ENCODE measurements at regions of chr10 and their contacts with region 1.

Region 1: DNA sequence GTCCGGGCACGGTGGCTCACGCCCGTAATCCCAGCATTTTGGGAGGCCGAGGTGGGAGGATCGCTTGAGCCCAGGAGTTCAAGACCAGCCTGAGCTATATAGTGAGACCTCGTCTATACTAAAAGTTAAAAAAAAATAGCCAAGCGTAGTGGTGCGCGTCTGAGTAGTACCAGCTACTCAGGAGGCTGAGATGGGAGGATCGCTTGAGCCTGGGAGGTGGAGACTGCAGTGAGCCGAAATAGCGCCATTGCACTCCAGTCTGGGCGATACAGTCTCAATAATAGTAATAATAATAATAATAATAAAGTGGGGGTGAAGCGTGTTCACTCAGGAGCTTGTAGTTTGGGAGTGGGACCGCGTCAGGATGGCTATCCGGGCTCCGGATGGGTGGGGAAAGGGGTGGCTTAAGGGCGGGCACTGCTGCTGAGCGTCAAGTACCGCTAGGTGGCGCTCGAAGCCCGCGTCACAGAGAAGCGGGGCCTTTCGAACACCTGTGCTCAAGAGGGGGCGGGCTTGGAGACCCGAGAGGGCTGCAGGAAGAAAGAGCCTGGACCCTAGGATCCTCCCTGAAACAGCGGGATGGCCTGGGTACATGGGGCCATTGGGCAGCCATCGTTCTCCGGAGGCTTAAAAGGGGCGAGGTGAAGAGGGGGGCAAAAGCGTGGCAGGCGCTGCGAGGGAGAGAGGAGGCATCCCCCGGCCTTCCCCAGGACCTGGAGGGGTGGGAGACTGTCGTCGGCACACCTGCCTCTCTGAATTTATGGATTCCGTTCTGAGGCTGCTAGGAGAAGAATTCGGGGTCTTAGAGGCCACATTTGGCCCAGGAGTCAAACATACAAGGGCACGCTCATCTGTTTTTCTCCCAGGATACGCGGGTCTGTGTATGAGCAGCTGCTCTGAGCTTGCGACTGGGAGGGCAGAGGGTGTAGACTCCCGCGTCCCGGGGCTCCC is 14.5 kb downstream of the LBX1 start:
- DNase-seq: peak; percentile 66
- ATAC-seq: peak; percentile 82
- H3K4me3 ChIP-seq: peak overlapping the region; percentile 55 to 63
- H3K27ac ChIP-seq: no peak overlapping the region
- H3K4me1 ChIP-seq: peaks cover 7 to 17% of the 10 kb centered on the region in 2 experiments; a peak in 2 of 4 replicates
- H3K27me3 ChIP-seq: 0 out of 2 replicates have a peak, but pooled peaks cover 3% of the 10 kb centered on the region
- CTCF ChIP-seq: peak; percentile 96 to 98 (median 97)
- POLR2A ChIP-seq: no peak
- RAD21 ChIP-seq: peak; percentile 99

Region 2: DNA sequence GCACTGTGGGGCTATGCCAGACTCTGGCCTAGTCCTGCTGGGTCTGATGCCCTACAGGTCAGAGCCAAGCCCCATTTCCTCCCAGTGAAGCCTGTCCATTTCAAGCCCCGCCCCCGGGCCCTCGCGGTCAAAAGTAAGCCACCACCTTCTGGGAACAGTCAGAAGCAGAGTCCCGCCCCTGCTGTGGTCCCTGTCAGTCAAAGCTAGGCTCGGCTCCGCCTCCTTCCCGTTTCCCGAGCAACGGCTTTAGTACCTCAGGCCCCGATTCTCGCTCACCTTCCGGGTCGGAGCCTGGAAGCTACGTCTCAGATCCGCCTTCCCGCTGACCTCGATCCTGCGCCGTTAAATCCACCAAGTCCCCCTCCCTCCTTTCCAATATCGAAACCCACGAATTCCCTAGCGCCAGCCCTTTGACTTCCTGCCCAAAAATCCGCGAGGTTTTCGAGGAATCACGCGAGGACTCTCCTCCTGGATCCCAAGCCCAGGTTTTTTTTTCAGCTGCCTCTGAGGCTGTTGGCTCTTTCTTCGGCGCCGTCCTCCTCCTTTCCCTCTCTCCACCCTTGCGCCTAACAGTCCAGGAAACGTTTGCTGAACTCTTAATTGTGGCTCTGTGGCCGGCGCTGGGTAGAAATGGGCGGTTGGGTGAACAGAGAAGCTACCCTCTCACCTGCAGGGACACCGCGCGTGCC is 171.9 kb before region 1 on chr10:
- CTCF ChIA-PET with region 1: interaction called, 13 read pairs
- POLR2A ChIA-PET with region 1: no interaction called
- RAD21 ChIA-PET with region 1: interaction called in 1 of 2 experiments, 3 read pairs
- intact Hi-C with region 1: loop called (anchors 2 kb)
- DNase-seq: peak; percentile 97
- ATAC-seq: peak; percentile 91
- H3K4me3 ChIP-seq: peak overlapping the region; percentile 55 to 59
- H3K27ac ChIP-seq: peak overlapping the region; percentile 84
- H3K4me1 ChIP-seq: peaks cover 26 to 33% of the 10 kb centered on the region in 2 experiments
- H3K27me3 ChIP-seq: no peaks in the 10 kb centered on the region
- CTCF ChIP-seq: no peak
- POLR2A ChIP-seq: peak; percentile 82
- RAD21 ChIP-seq: no peak

Region 3: GRCh38 chr10:101258179-101258885 is 43.6 kb after region 1 on chr10:
- CTCF ChIA-PET with region 1: interaction called, 10 read pairs
- POLR2A ChIA-PET with region 1: no interaction called
- RAD21 ChIA-PET with region 1: no interaction called
- intact Hi-C with region 1: no loop called
- DNase-seq: peak; percentile 89
- ATAC-seq: peak; percentile 99
- H3K4me3 ChIP-seq: no peak overlapping the region
- H3K27ac ChIP-seq: no peak overlapping the region
- H3K4me1 ChIP-seq: peaks cover 0 to 5% of the 10 kb centered on the region in 2 experiments; a peak in 1 of 4 replicates
- H3K27me3 ChIP-seq: no peaks in the 10 kb centered on the region
- CTCF ChIP-seq: no peak
- POLR2A ChIP-seq: no peak
- RAD21 ChIP-seq: no peak

Region 4: GRCh38 chr10:101441541-101442455 is 227.1 kb after region 1 on chr10:
- CTCF ChIA-PET with region 1: interaction called, 36 read pairs
- POLR2A ChIA-PET with region 1: no interaction called
- RAD21 ChIA-PET with region 1: interaction called, 4 to 5 read pairs
- intact Hi-C with region 1: loop called (anchors 1 kb)
- DNase-seq: peak; percentile 80
- ATAC-seq: peak; percentile 99
- H3K4me3 ChIP-seq: no peak overlapping the region
- H3K27ac ChIP-seq: no peak overlapping the region
- H3K4me1 ChIP-seq: no peaks in the 10 kb centered on the region
- H3K27me3 ChIP-seq: no peaks in the 10 kb centered on the region
- CTCF ChIP-seq: peak; percentile 78 to 96 (median 84)
- POLR2A ChIP-seq: no peak
- RAD21 ChIP-seq: peak; percentile 97

Region 5: GRCh38 chr10:101587725-101588653 is 373.3 kb after region 1 on chr10 and contains the starts of genes DPCD and POLL:
- CTCF ChIA-PET with region 1: interaction called, 11 read pairs
- POLR2A ChIA-PET with region 1: interaction called, 3 read pairs
- RAD21 ChIA-PET with region 1: no interaction called
- intact Hi-C with region 1: no loop called
- DNase-seq: peak; percentile 91
- ATAC-seq: peak; percentile 92
- H3K4me3 ChIP-seq: peak within 1 kb of the TSS; percentile 89 to 94
- H3K27ac ChIP-seq: peak within 1 kb of the TSS; percentile 63
- H3K4me1 ChIP-seq: peaks cover 10 to 16% of the 10 kb centered on the region in 2 experiments; a peak in 3 of 4 replicates
- H3K27me3 ChIP-seq: no peaks in the 10 kb centered on the region
- CTCF ChIP-seq: no peak
- POLR2A ChIP-seq: peak; percentile 75
- RAD21 ChIP-seq: no peak
- total RNA-seq, gene DPCD: 39.5 TPM
- total RNA-seq, gene POLL: 51.3 TPM

Region 6: GRCh38 chr10:101693978-101694673 is 479.4 kb after region 1 on chr10:
- CTCF ChIA-PET with region 1: no interaction called
- POLR2A ChIA-PET with region 1: no interaction called
- RAD21 ChIA-PET with region 1: no interaction called
- intact Hi-C with region 1: no loop called
- DNase-seq: no peak
- ATAC-seq: peak; percentile 78
- H3K4me3 ChIP-seq: peak overlapping the region; percentile 83 to 84
- H3K27ac ChIP-seq: peak overlapping the region; percentile 94
- H3K4me1 ChIP-seq: peaks cover 13 to 17% of the 10 kb centered on the region in 2 experiments
- H3K27me3 ChIP-seq: no peaks in the 10 kb centered on the region
- CTCF ChIP-seq: no peak
- POLR2A ChIP-seq: peak; percentile 64
- RAD21 ChIP-seq: no peak

Region 7: DNA sequence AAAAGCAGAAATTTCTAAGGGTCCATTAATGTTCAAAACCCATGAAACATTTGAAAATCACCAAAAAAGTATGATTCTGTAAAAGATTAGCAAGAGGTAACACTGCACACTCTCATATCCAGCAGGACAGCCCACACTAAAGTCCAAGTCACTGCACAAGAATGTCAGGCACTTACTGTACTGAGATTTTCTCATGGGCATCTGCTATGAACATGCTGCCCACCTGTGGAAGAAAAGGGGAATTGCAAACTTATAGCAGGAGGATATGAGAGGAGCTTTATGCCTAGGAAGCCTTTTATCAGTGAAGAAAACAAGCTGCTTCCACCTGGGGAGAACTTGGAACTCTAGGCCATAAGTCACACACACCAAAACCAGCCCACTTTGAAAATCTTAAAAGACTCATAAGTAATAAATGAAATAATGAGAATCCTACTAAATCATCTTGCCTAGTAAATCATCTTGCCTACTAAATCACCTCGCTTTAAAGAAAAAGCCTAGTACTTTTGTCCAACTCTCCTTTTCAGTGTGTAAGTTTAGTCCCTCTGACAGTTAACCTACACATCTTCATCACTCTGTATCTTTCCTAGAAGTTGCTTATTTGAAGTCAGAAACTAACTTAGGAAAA is 795.2 kb after region 1 on chr10:
- CTCF ChIA-PET with region 1: interaction called, 16 read pairs
- POLR2A ChIA-PET with region 1: no interaction called
- RAD21 ChIA-PET with region 1: no interaction called
- intact Hi-C with region 1: loop called (anchors 2 kb)
- DNase-seq: peak; percentile 88
- ATAC-seq: peak; percentile 97
- H3K4me3 ChIP-seq: no peak overlapping the region
- H3K27ac ChIP-seq: no peak overlapping the region
- H3K4me1 ChIP-seq: peaks cover 5 to 7% of the 10 kb centered on the region in 2 experiments
- H3K27me3 ChIP-seq: no peaks in the 10 kb centered on the region
- CTCF ChIP-seq: peak; percentile 98 to 100 (median 99)
- POLR2A ChIP-seq: no peak
- RAD21 ChIP-seq: peak; percentile 100